Dendritic cell treated with granulocyte-macrophage colony-stimulating factor and Interleukin-4, amounts not matched to agents 40 ng/mL and 50 ng/mL, for 4 days (primary cell): ENCODE measurements at regions of chr7 and their contacts with region 1.

Region 1: GRCh38 chr7:41779918-41780317 is 77.0 kb upstream of the INHBA start:
- H3K4me3 Mint-ChIP-seq: peak overlapping the region; percentile 21
- H3K27ac Mint-ChIP-seq: peak overlapping the region; percentile 68
- H3K4me1 Mint-ChIP-seq: peaks cover 41% of the 10 kb centered on the region
- H3K27me3 Mint-ChIP-seq: no peaks in the 10 kb centered on the region

Region 2: GRCh38 chr7:41731492-41732435 is 48.2 kb before region 1 on chr7:
- intact Hi-C with region 1: loop called (anchors 5 kb)
- H3K4me3 Mint-ChIP-seq: no peak overlapping the region
- H3K27ac Mint-ChIP-seq: peak overlapping the region; percentile 50
- H3K4me1 Mint-ChIP-seq: peaks cover 51% of the 10 kb centered on the region
- H3K27me3 Mint-ChIP-seq: peaks cover 11% of the 10 kb centered on the region